ENCODE measurements at regions of chrX and their contacts with region 1.

Region 1: DNA sequence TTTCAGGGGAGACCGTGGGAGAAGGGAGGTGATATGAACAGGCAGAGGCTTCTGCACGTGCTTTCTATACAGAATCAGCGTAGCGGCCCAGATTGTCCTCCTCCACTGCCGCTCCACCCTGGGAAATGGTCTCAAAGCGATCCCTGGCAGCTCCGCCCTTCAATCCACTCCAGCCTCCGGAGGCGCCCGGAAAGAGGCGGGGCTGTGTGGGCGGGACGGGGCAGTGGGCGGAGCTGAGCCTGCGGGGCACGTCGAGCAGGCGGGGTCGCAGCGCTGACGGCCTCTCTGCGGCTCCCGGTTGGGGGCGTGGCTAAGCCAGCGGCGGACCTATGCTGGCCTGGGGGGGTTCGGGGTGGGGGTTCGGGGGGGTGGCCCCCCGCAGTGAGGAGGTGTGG is 210 bp upstream of the SMIM10L2A start:
- DNase-seq: peak; percentile 92
- H3K4me3 Mint-ChIP-seq: peak overlapping the region; percentile 70
- H3K27ac Mint-ChIP-seq: no peak overlapping the region
- H3K4me1 Mint-ChIP-seq: peaks cover 7% of the 10 kb centered on the region
- H3K27me3 Mint-ChIP-seq: no peaks in the 10 kb centered on the region

Region 2: GRCh38 chrX:135295238-135295943 is 126.1 kb before region 1 on chrX:
- CTCF ChIA-PET with region 1: no interaction called
- intact Hi-C with region 1: loop called (anchors 5 kb)
- DNase-seq: peak; percentile 77
- H3K4me3 Mint-ChIP-seq: peak overlapping the region; percentile 85
- H3K27ac Mint-ChIP-seq: peak overlapping the region; percentile 83
- H3K4me1 Mint-ChIP-seq: peaks cover 16% of the 10 kb centered on the region
- H3K27me3 Mint-ChIP-seq: no peaks in the 10 kb centered on the region

Region 3: DNA sequence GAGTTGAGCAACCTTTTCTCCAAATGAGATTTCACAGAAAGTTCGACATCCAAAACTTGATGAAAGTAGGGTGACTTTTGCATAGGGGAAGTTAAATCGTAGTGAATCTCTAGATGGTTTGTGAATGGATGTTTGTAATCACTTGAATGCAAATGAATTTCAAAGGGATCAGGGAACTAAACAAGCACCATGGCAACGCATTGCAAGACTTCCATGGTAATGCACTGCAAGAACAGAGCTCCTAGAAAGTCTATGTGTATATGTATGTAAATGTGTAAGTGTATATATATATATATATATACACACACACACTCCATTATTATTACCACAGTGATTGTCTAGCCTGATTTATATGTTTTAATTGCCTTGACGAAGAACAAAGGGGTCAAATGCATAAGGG is 126.2 kb after region 1 on chrX:
- CTCF ChIA-PET with region 1: no interaction called
- intact Hi-C with region 1: no loop called
- DNase-seq: no peak
- H3K4me3 Mint-ChIP-seq: no peak overlapping the region
- H3K27ac Mint-ChIP-seq: no peak overlapping the region
- H3K4me1 Mint-ChIP-seq: peaks cover 21% of the 10 kb centered on the region
- H3K27me3 Mint-ChIP-seq: no peaks in the 10 kb centered on the region